Thyroid gland (tissue), 4 donors: ENCODE measurements at regions of chr12 and their contacts with region 1.

Region 1: GRCh38 chr12:32755654-32756475 is at the start of gene YARS2:
- DNase-seq: peak; percentile 96 to 97
- H3K4me3 ChIP-seq: peak within 1 kb of the TSS; percentile 61 to 90 (median 73)
- H3K27ac ChIP-seq: peak within 1 kb of the TSS; percentile 65 to 99 (median 93)
- H3K4me1 ChIP-seq: peaks cover 9 to 12% of the 10 kb centered on the region in 2 donors
- H3K27me3 ChIP-seq: no peaks in the 10 kb centered on the region
- CTCF ChIP-seq: peak in 5 of 6 experiments; percentile 42 to 98 (median 86)
- POLR2A ChIP-seq: peak in 1 of 2 donors; percentile 73
- total RNA-seq, gene YARS2: 21.1 to 48.5 (median 25.3) TPM

Region 2: GRCh38 chr12:34016361-34016760 is 1260.5 kb after region 1 on chr12:
- intact Hi-C with region 1: loop called (anchors 5 kb)
- DNase-seq: no peak
- H3K4me3 ChIP-seq: no peak overlapping the region
- H3K27ac ChIP-seq: no peak overlapping the region
- H3K4me1 ChIP-seq: peaks cover 0 to under 1% of the 10 kb centered on the region in 2 donors
- H3K27me3 ChIP-seq: no peaks in the 10 kb centered on the region
- CTCF ChIP-seq: no peak
- POLR2A ChIP-seq: no peak